Psoas muscle (tissue), 8 donors: ENCODE measurements at regions of chr2 and their contacts with region 1.

Region 1: DNA sequence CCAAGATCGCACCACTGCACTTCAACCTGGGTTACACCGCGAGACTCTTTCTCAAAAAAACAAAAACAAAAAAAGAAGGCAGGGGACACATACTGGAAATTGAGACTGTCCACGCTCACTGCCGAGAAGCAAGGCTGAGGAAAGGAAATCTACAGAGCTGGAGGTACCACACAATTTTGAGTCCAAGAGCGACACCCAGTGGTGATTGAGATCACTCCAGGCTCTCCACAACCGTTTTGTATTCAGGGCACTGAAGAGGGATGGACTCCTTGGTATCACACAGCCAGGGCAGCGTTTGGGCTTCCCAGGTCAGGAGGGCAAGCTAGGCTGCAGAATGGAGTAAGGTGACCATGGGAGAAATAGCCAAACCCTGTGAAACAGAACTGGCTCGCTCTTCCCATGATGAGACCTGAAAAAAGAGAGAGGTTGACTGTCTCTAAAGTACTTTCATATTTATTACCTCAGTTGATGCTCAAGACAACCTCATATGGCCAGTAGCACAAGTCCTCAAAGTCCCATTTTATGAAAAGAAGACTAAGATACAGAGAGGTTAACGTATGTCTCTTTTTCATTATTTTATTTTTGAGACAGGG is 74.5 kb upstream of the YPEL5 start:
- DNase-seq: peak in 1 of 2 donors; percentile 28
- ATAC-seq: peak; percentile 66 to 83 (median 70)
- H3K4me3 ChIP-seq: no peak overlapping the region
- H3K27ac ChIP-seq: no peak overlapping the region
- H3K4me1 ChIP-seq: no peaks in the 10 kb centered on the region
- H3K27me3 ChIP-seq: peaks cover 0 to 19% (median 2%) of the 10 kb centered on the region in 3 donors
- CTCF ChIP-seq: peak; percentile 55

Region 2: DNA sequence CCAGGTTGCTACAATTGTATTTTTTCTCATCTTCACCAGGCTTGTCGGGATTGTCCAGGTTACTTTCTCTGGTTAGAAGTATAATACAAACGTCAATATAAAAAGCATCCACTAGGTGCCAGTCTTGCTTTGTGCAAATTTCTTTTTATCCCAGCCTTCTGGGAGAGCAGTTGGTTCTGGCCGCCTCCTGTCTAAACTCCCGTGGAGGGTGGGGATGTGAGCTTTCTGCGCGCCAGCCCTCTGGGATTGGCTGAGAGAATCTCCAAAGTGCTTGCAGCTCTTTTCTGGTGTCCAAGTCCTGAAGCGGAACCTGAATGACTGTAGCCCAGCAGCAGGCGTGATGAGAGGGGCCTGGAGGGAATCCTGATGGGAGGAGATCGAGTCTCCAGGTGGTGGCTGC is 1113.7 kb before region 1 on chr2:
- intact Hi-C with region 1: loop called in 1 of 2 experiments (anchors 5 kb)
- DNase-seq: peak; percentile 64 to 87
- ATAC-seq: peak; percentile 88 to 92 (median 89)
- H3K4me3 ChIP-seq: no peak overlapping the region
- H3K27ac ChIP-seq: no peak overlapping the region
- H3K4me1 ChIP-seq: peaks cover 5% of the 10 kb centered on the region
- H3K27me3 ChIP-seq: no peaks in the 10 kb centered on the region
- CTCF ChIP-seq: peak; percentile 68

Region 3: DNA sequence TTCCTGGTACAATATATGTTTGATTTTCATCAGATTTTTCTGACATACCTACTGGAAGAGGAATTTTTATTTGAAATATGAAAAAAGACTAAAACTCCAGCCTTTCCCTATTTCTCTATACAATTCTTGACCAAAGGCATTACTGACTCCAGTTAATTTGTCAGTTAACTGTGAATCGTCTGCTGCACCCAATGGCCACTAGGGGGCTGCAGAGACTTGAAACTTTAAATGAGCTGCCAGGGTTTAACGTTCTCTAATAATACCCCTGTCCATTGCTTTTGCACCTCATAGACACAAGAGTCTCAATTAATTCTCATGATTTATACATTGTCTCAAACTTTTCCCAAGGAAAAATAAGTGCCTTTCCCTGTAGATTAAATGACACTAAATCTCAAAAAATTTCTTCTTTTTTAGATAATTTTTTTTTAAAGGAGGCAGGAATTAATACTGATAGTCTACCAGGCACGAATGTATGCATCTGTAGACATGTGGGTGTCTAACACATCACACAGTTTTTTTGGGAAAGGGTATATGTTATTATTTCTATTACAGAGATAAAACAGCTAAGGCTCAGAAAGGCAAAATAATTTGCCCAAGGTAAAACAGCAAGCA is 149.1 kb before region 1 on chr2:
- intact Hi-C with region 1: loop called (anchors 5 kb)
- DNase-seq: peak in 1 of 2 donors; percentile 32
- ATAC-seq: peak in 1 of 4 donors; percentile 57
- H3K4me3 ChIP-seq: no peak overlapping the region
- H3K27ac ChIP-seq: no peak overlapping the region
- H3K4me1 ChIP-seq: peaks cover 20% of the 10 kb centered on the region
- H3K27me3 ChIP-seq: peaks cover under 1 to 60% (median 9%) of the 10 kb centered on the region in 3 donors
- CTCF ChIP-seq: peak; percentile 84